MCF 10A (cell line): ENCODE measurements at regions of chr12 and their contacts with region 1.

Region 1: DNA sequence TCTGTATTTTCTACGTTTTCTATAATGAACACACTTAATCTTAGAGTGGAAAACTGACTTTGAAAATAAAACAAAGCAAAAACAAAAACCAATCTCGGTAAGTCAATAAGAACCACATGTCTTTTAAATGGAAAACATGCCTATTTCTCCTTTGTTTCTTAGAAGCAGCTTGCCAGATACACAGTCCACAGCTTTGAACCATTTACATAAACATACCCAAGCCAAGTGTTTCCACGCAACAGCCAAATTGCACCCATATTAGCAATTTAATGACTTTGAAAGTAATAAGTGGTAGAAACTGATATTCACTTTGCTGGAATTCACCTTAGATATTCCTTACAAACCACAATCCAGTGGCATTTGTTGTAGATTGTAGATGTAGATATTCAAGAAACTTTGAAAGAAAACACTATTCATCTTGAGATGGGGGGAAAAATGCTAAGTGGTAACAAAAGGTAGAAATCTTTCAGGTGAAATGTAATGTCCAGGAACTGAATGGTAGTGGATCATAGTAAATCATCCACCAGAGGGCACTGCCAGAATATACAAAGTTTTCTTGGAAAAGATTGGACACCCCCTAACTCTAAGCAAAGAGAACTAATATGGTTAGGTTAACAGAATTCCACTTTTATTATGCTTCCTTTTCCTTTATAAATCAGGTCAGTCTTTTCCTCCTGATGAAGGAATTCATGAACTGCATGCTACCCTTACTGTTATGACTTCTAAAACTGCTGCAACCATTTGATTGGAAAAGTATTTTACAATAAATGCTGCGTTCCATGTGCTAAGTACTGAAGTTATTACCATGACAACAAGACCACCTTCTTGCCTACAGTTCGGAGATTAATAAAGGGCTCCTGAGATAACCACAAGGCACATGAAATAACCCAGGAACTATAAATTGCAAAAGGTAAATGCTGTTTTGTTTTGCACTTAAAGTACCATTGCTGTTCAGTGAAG is 69.8 kb downstream of the RERG start:
- DNase-seq: peak; percentile 61
- H3K4me3 Mint-ChIP-seq: no peak overlapping the region
- H3K27ac Mint-ChIP-seq: no peak overlapping the region
- H3K4me1 Mint-ChIP-seq: peaks cover 40% of the 10 kb centered on the region
- H3K27me3 Mint-ChIP-seq: no peaks in the 10 kb centered on the region
- CTCF ChIP-seq: peak; percentile 41

Region 2: GRCh38 chr12:14845350-14845750 is 306.1 kb before region 1 on chr12:
- CTCF ChIA-PET with region 1: interaction called, 12 read pairs
- POLR2A ChIA-PET with region 1: no interaction called
- intact Hi-C with region 1: loop called (anchors 5 kb)
- DNase-seq: peak; percentile 74
- H3K4me3 Mint-ChIP-seq: no peak overlapping the region
- H3K27ac Mint-ChIP-seq: peak overlapping the region; percentile 78
- H3K4me1 Mint-ChIP-seq: peaks cover 23% of the 10 kb centered on the region
- H3K27me3 Mint-ChIP-seq: no peaks in the 10 kb centered on the region
- CTCF ChIP-seq: peak; percentile 68

Region 3: GRCh38 chr12:15050659-15051058 is 100.8 kb before region 1 on chr12:
- CTCF ChIA-PET with region 1: no interaction called
- POLR2A ChIA-PET with region 1: no interaction called
- intact Hi-C with region 1: no loop called
- DNase-seq: peak; percentile 23
- H3K4me3 Mint-ChIP-seq: no peak overlapping the region
- H3K27ac Mint-ChIP-seq: no peak overlapping the region
- H3K4me1 Mint-ChIP-seq: no peaks in the 10 kb centered on the region
- H3K27me3 Mint-ChIP-seq: no peaks in the 10 kb centered on the region
- CTCF ChIP-seq: no peak

Region 4: GRCh38 chr12:15193946-15194345 is 42.5 kb after region 1 on chr12:
- CTCF ChIA-PET with region 1: interaction called, 9 read pairs
- POLR2A ChIA-PET with region 1: interaction called, 15 read pairs
- intact Hi-C with region 1: no loop called
- DNase-seq: peak; percentile 74
- H3K4me3 Mint-ChIP-seq: peak overlapping the region; percentile 22
- H3K27ac Mint-ChIP-seq: peak overlapping the region; percentile 84
- H3K4me1 Mint-ChIP-seq: peaks cover 37% of the 10 kb centered on the region
- H3K27me3 Mint-ChIP-seq: no peaks in the 10 kb centered on the region
- CTCF ChIP-seq: no peak

Region 5: DNA sequence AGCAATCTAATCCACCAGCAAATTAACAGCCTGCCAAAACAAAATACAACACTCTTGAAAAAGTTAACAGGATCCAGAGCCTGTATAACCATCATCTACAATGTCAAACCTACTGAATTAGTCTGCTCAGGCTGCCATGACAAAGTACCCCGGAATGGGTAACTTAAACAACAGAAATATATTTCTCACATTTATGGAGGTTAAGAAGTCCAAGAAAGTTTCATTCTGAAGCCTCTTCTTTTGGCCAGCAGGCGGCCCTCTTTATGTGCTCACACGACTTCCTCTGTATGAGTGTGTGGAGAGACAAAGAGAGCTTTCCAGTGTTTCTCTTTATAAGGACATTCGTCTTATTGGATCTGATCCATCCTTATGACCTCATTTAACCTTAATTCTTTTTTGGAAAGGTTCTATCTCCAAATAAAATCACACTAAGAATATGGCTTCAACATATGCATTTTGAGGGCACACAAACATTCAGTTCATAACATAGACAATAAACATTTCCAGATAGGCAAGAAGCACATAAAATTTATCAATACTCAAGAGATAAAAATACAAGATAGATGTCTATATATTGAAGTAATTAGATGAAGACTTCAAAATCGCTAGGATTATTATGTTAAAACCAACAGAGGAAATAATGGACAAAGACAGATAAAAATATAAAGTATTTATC is 75.7 kb after region 1 on chr12:
- CTCF ChIA-PET with region 1: interaction called, 228 read pairs
- POLR2A ChIA-PET with region 1: interaction called, 34 read pairs
- intact Hi-C with region 1: no loop called
- DNase-seq: peak; percentile 87
- H3K4me3 Mint-ChIP-seq: no peak overlapping the region
- H3K27ac Mint-ChIP-seq: peak overlapping the region; percentile 59
- H3K4me1 Mint-ChIP-seq: peaks cover 49% of the 10 kb centered on the region
- H3K27me3 Mint-ChIP-seq: no peaks in the 10 kb centered on the region
- CTCF ChIP-seq: peak; percentile 59

Region 6: DNA sequence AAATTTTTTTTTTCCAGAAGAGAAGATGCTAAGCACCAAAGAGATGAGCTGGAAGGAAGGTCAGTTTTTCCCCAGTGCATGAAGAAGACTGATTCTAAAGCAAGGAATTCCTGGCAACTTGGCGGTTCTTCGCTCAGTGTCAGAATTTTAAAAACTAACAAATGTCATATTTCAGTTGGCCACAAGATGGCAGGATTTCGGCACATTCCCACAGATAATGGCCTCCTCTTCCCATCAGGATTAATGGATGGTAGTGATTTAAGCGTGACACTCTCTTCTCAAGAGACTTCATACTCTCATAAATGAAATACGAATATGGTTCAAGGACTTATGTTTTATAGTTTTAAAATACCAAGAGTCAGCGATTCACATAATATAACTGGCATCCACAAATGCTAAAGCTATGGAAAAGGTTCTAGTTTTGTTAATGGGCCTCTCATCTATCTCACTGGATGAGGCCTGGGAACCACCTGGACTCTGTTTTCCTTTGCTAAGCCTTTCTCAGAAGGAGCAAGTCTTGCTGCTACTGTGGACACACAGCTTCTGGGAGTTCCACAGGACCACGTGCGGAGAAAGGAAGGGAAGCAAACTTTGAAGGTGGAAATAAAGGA is 124.8 kb after region 1 on chr12:
- CTCF ChIA-PET with region 1: interaction called, 15 read pairs
- POLR2A ChIA-PET with region 1: interaction called, 4 read pairs
- intact Hi-C with region 1: loop called (anchors 1 kb)
- DNase-seq: peak; percentile 78
- H3K4me3 Mint-ChIP-seq: peak overlapping the region; percentile 25
- H3K27ac Mint-ChIP-seq: peak overlapping the region; percentile 95
- H3K4me1 Mint-ChIP-seq: peaks cover 55% of the 10 kb centered on the region
- H3K27me3 Mint-ChIP-seq: no peaks in the 10 kb centered on the region
- CTCF ChIP-seq: peak; percentile 61

Region 7: DNA sequence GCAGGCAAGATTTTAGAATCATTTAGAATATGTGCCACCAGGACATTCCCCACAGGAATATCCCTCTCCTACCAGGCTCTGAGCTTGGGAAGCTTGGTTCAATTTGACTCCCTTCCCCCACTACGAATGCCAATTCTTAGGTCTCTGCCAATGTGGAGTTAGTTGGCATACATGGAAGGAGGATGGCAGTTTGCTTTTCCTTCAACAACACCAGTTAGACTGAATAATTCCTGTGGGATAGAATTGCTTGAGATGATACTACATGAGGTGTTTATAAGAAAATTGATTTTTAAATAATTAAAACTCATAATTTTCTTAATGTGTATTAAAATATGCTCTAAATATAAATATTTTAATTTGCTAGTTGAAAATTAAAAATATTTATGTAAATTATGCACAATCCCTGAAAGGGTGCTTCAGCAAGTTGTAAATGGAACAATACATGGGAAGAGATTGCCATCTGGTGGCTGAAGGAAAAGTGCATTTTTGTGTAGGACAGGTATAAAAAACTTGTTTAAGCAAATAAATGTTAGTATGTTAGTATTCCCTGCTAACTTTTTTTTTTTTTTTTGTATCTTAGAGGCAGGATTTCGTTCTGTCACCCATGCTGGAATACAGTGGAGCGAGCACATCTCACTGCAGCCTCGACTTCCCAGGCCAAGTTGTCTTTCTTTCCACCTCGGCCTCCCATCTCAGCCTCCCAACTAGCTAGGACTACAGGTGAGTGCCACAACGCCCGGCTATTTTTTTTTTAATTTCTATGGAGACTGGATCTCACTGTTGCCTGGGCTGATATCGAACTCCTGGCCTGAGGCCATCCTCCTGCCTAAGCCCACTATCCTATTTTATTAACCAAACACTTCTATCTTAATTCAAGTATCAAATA is 704.9 kb after region 1 on chr12:
- CTCF ChIA-PET with region 1: no interaction called
- POLR2A ChIA-PET with region 1: no interaction called
- intact Hi-C with region 1: loop called (anchors 10 kb)
- DNase-seq: peak; percentile 76
- H3K4me3 Mint-ChIP-seq: no peak overlapping the region
- H3K27ac Mint-ChIP-seq: peak overlapping the region; percentile 75
- H3K4me1 Mint-ChIP-seq: peaks cover 26% of the 10 kb centered on the region
- H3K27me3 Mint-ChIP-seq: no peaks in the 10 kb centered on the region
- CTCF ChIP-seq: peak; percentile 82